ENCODE measurements at regions of chr7 and their contacts with region 1.

Region 1: GRCh38 chr7:148156233-148156632 is 434.3 kb upstream of the C7orf33 start:
- DNase-seq: no peak
- ATAC-seq: no peak
- H3K4me3 Mint-ChIP-seq: no peak overlapping the region
- H3K27ac Mint-ChIP-seq: no peak overlapping the region
- H3K4me1 Mint-ChIP-seq: no peaks in the 10 kb centered on the region
- H3K27me3 Mint-ChIP-seq: no peaks in the 10 kb centered on the region

Region 2: GRCh38 chr7:147472556-147472955 is 683.7 kb before region 1 on chr7:
- CTCF ChIA-PET with region 1: no interaction called
- POLR2A ChIA-PET with region 1: no interaction called
- intact Hi-C with region 1: no loop called
- DNase-seq: no peak
- ATAC-seq: no peak
- H3K4me3 Mint-ChIP-seq: no peak overlapping the region
- H3K27ac Mint-ChIP-seq: no peak overlapping the region
- H3K4me1 Mint-ChIP-seq: no peaks in the 10 kb centered on the region
- H3K27me3 Mint-ChIP-seq: no peaks in the 10 kb centered on the region

Region 3: GRCh38 chr7:148014541-148014940 is 141.7 kb before region 1 on chr7:
- CTCF ChIA-PET with region 1: no interaction called
- POLR2A ChIA-PET with region 1: no interaction called
- intact Hi-C with region 1: loop called in 1 of 2 experiments (anchors 5 kb)
- DNase-seq: no peak
- ATAC-seq: no peak
- H3K4me3 Mint-ChIP-seq: no peak overlapping the region
- H3K27ac Mint-ChIP-seq: no peak overlapping the region
- H3K4me1 Mint-ChIP-seq: no peaks in the 10 kb centered on the region
- H3K27me3 Mint-ChIP-seq: no peaks in the 10 kb centered on the region